Dorsolateral prefrontal cortex (tissue), 120 donors: ENCODE measurements at regions of chr2 and their contacts with region 1.

Region 1: DNA sequence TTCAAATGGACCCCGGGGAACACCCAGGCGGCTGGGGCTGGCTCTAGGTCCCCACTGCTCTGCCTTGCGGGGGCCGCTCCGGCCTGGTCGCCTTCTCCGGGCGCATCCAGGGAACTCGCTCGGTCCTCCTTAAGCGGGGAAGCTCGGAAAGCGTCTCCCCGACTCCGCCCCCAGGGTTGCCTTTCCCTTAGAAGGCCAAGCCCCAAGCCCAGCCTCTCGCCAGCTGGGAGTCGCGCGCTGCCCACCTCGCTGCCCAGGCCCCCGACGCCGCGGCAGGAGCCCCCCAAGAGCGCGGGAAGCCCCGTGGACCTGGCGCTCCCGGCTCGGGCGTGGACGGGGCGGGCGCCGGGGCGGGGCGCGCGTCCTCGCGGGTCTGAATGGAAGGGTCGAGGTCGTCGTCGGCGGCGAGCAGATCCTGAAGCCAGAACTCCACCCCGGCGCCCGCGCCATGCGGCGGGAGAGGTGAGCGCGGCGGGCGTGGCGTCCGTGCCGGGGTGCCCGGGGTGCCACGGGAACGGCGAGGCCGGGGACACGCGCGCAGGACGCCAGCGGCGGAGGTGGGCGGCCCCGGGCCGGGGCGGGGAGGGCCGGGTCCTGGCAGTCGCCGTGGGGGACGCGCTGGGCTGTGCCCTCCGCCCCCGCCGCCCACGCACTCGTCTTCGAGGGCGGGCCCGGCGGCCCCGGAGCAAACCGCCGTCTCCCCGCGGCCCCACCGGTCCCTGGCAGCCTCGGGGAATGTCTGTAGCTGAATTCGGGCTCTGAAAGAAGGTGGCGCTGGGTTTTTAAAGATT is at the start of gene BOK:
- DNase-seq: peak; percentile 59 to 84 (median 74)
- H3K4me3 ChIP-seq: peak within 1 kb of the TSS; percentile 31 to 88 (median 71)
- H3K27ac ChIP-seq: peak within 1 kb of the TSS; percentile 58 to 100 (median 97)
- H3K27me3 ChIP-seq: peaks cover 0 to 12% (median 0%) of the 10 kb centered on the region in 45 donors
- CTCF ChIP-seq: peak in 5 of 56 donors; percentile 10 to 26 (median 15)
- total RNA-seq, gene BOK: 16.7 to 187 (median 53.1) TPM

Region 2: DNA sequence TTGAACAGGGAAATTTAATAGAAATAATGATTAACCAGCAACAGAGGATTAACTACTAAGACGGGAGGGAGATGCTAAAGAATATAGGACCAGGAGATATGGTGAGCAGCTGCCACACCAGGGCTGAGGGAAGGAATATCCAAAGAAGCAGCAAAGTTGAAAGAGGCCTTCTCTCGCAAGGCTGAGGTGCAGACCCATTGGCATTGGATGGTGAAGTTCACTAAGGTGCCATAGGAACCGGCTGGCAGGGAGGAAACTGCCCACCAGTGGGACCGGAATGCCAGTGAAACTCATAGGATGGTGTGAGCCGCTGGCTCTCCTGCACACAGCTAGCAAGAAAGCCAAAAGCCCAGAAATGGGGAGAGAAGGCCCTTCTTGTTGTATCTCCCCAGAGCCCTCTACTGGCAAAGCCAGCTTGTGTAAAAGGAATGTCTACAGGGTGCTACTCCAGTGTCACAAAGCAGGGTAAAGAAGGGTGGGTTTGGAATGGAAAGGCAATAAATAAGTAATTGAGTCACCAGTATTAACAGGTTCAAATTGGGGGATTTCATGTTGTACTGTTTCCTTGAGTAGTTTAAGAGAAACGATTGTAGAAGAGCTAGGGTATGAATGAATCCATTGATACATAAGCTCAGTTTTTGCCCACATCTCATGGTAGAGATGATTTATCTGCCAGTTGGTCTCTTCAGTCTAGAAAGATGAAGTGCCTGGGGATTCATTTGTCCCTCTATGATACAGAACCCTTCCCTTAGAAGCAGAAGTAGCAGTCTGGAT is 166.6 kb before region 1 on chr2:
- intact Hi-C with region 1: no loop called
- DNase-seq: peak in 1 of 10 donors; percentile 56
- H3K4me3 ChIP-seq: no peak overlapping the region
- H3K27ac ChIP-seq: peak overlapping the region in 42 of 59 donors; percentile 3 to 85 (median 56)
- H3K27me3 ChIP-seq: no peaks in the 10 kb centered on the region
- CTCF ChIP-seq: peak in 52 of 56 donors; percentile 21 to 69 (median 49)

Region 3: GRCh38 chr2:241412144-241412543 is 146.6 kb before region 1 on chr2:
- intact Hi-C with region 1: loop called in 1 of 2 experiments (anchors 5 kb)
- DNase-seq: no peak
- H3K4me3 ChIP-seq: no peak overlapping the region
- H3K27ac ChIP-seq: peak overlapping the region in 22 of 59 donors; percentile 17 to 95 (median 84)
- H3K27me3 ChIP-seq: no peaks in the 10 kb centered on the region
- CTCF ChIP-seq: no peak

Region 4: GRCh38 chr2:241508240-241509154 is 50.2 kb before region 1 on chr2 and contains the start of gene STK25:
- intact Hi-C with region 1: loop called (anchors 1 to 2 kb)
- DNase-seq: peak; percentile 93 to 99 (median 97)
- H3K4me3 ChIP-seq: peak within 1 kb of the TSS; percentile 56 to 100 (median 90)
- H3K27ac ChIP-seq: peak within 1 kb of the TSS; percentile 66 to 97 (median 90)
- H3K27me3 ChIP-seq: no peaks in the 10 kb centered on the region
- CTCF ChIP-seq: peak in 23 of 56 donors; percentile 6 to 54 (median 29)
- total RNA-seq, gene STK25: 138 to 233 (median 178) TPM

Region 5: DNA sequence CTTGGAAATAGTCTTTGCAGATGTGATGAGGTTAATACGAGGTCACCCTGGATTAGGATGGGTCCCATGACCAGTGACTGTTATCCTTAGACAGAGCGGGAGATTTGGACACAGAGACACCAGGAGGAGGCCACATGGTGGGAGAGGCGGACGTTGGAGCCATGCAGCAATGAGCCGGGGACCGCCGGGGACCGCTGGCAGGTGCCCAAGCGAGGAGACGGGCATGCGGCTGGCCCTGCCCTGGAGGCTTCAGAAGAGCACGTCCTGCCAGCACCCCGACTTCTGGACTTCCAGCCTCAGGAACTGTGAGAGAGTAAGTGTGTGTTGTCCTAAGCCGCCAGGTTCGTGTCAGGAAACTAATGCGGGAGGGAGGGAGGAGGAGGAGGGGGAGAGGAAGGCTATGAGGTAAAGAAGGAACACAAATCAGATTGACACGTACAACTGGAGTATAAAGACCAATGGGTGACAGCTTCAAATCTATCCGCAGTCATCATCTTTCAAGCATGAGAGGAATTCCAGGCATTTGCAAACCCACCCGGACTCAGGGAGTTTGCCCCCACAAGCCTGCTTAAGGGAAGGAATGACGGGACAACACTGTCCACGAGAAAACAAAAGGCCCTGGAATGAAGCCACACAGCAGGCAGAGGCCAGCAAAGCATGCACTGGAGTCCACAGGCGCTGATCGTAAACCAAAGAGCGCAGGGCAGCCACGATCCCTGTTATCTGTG is 11.8 kb before region 1 on chr2:
- intact Hi-C with region 1: loop called in 1 of 2 experiments (anchors 1 kb)
- DNase-seq: peak in 1 of 10 donors; percentile 57
- H3K4me3 ChIP-seq: peak overlapping the region in 19 of 59 donors; percentile 3 to 47 (median 21)
- H3K27ac ChIP-seq: peak overlapping the region in 3 of 59 donors; percentile 16 to 28 (median 19)
- H3K27me3 ChIP-seq: peaks cover 0 to 15% (median under 1%) of the 10 kb centered on the region in 45 donors
- CTCF ChIP-seq: no peak

Region 6: DNA sequence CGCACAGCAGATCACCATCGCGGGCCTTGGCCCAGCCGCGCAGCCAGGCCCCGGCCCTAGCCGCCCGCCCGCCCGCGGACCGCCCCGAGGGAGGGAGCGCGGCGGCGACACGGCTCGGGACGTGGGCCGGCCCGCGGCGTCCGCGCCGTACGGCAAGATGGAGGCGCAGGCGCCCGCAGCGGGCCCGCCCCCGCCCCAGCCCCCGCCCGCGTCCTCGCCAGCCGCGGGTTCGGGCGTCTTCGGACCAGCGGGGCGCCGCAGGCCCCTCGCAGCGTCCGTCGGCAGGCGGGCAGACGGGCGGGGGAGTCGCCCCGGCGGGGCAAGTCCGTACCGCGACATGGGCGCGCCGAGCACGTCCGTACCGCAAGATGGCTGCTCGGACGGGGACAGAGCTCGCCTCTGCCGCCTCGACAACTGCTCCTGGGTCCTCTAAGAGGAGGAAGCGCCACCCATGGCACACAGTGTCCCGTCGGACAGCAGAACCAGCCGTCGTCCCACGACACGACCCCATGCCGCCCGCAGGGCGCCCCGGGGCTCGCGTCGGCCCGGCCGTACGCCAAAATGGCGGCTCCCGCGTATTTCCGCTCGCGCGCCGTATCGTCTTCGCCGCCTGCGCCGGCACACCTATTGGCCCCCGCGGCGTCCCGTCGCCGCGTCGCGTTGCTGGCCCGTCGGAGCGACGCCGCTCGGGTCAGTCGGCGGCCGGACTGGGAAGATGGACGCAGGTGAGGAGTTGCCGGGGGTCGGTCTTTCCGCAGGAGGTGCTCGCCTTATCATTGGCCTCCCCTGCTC is 78.5 kb after region 1 on chr2 and contains the starts of genes ATG4B and THAP4:
- intact Hi-C with region 1: loop called in 1 of 2 experiments (anchors 5 kb)
- DNase-seq: peak; percentile 69 to 92 (median 81)
- H3K4me3 ChIP-seq: peak within 1 kb of the TSS; percentile 57 to 99 (median 86)
- H3K27ac ChIP-seq: peak within 1 kb of the TSS; percentile 91 to 100 (median 98)
- H3K27me3 ChIP-seq: no peaks in the 10 kb centered on the region
- CTCF ChIP-seq: peak in 24 of 56 donors; percentile 7 to 48 (median 22)
- total RNA-seq, gene ATG4B: 79.3 to 164 (median 118) TPM
- total RNA-seq, gene THAP4: 35.1 to 69.3 (median 54.0) TPM